HCT116 (cell line): ENCODE measurements at regions of chr10 and their contacts with region 1.

Region 1: DNA sequence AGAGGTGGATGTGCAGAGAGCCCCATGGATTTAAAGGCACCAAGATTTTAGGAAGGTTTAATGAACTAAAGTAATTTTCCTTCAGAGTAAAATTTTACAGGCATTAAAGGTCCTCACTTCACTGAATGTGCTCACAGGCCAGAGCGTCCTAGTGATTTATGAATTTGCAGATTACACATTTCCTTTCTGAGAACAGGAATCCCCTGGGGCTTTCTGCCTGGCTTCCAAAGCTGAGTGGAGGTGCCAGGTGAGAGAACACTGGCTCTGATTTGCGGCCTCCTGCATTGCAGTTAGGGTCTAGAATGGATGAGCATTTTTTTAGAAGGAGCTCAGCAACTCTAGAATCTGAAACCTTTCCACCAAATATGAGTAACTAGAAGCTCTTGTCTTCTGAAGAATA is 194.3 kb downstream of the SORCS3 start:
- DNase-seq: no peak
- ATAC-seq: no peak
- H3K4me3 ChIP-seq: no peak overlapping the region
- H3K27ac ChIP-seq: no peak overlapping the region
- H3K4me1 ChIP-seq: no peaks in the 10 kb centered on the region
- H3K27me3 ChIP-seq: peaks cover 93% of the 10 kb centered on the region
- CTCF ChIP-seq: no peak
- POLR2A ChIP-seq: no peak
- RAD21 ChIP-seq: no peak

Region 2: GRCh38 chr10:104472493-104472892 is 362.9 kb before region 1 on chr10:
- CTCF ChIA-PET with region 1: no interaction called
- POLR2A ChIA-PET with region 1: no interaction called
- RAD21 ChIA-PET with region 1: no interaction called
- intact Hi-C with region 1: no loop called
- DNase-seq: peak; percentile 3
- ATAC-seq: no peak
- H3K4me3 ChIP-seq: no peak overlapping the region
- H3K27ac ChIP-seq: no peak overlapping the region
- H3K4me1 ChIP-seq: no peaks in the 10 kb centered on the region
- H3K27me3 ChIP-seq: peaks cover 48% of the 10 kb centered on the region
- CTCF ChIP-seq: no peak
- POLR2A ChIP-seq: no peak
- RAD21 ChIP-seq: no peak

Region 3: DNA sequence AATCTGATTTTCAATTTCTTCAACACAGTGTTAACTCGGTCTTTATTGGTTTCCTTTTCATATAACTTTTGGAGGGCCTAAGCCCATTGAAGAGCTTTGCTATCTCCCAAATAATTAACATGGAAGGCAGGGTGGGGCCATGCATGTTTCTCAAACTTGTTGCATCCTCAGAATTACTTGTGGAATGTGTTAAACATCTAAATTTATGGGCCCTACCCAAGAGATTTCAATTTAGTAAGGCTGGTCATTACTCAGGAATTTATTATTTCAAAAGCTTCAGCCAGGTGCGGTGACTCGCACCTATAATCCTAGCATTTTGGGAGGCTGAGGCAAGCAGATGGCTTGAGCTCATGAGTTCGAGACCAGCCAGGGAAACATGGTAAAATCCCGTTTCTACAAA is 14.6 kb after region 1 on chr10:
- CTCF ChIA-PET with region 1: no interaction called
- POLR2A ChIA-PET with region 1: no interaction called
- RAD21 ChIA-PET with region 1: no interaction called
- intact Hi-C with region 1: loop called (anchors 1 kb)
- DNase-seq: no peak
- ATAC-seq: no peak
- H3K4me3 ChIP-seq: no peak overlapping the region
- H3K27ac ChIP-seq: no peak overlapping the region
- H3K4me1 ChIP-seq: peaks cover 0 to 9% of the 10 kb centered on the region in 2 experiments; a peak in 1 of 4 replicates
- H3K27me3 ChIP-seq: peaks cover 18% of the 10 kb centered on the region
- CTCF ChIP-seq: no peak
- POLR2A ChIP-seq: no peak
- RAD21 ChIP-seq: no peak

Region 4: DNA sequence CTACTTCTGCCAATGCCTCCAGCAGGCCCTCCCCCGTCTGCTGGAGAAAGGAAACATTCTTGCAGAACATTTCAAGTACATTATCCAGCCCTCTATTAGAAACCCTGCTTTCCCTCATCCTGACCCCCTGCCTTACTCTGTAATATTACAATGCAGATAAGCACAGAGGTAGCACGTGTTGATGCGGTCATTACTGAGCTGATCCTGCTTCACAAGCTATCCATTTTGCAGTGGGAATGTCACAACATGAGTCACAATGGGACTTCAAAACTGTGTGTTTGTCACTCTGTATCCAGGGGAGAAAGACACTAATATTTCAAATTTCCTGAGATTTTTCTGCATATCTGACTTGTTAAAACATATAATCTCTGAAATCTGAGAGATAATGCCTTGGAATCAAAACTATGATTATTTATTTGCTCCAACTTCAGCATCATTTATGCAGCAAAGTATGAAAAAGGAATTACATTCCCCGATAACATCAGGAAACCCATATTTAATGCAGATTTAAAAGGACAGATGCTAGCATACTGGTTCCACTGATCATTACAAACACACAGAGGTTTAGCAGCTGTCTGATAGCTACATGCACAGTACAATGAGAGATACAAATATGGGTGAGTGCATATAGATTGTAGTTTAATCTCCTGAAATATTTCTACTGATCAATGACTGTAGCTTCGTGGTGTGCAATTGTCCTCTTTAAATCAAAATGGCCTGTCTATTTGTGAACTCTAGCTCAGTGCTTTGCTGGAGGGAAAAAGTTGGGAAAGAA is 45.4 kb after region 1 on chr10:
- CTCF ChIA-PET with region 1: no interaction called
- POLR2A ChIA-PET with region 1: no interaction called
- RAD21 ChIA-PET with region 1: no interaction called
- intact Hi-C with region 1: no loop called
- DNase-seq: no peak
- ATAC-seq: no peak
- H3K4me3 ChIP-seq: no peak overlapping the region
- H3K27ac ChIP-seq: no peak overlapping the region
- H3K4me1 ChIP-seq: no peaks in the 10 kb centered on the region
- H3K27me3 ChIP-seq: peaks cover 56% of the 10 kb centered on the region
- CTCF ChIP-seq: no peak
- POLR2A ChIP-seq: no peak
- RAD21 ChIP-seq: no peak

Region 5: GRCh38 chr10:105056413-105056812 is 221.0 kb after region 1 on chr10:
- CTCF ChIA-PET with region 1: no interaction called
- POLR2A ChIA-PET with region 1: no interaction called
- RAD21 ChIA-PET with region 1: no interaction called
- intact Hi-C with region 1: no loop called
- DNase-seq: no peak
- ATAC-seq: no peak
- H3K4me3 ChIP-seq: no peak overlapping the region
- H3K27ac ChIP-seq: no peak overlapping the region
- H3K4me1 ChIP-seq: no peaks in the 10 kb centered on the region
- H3K27me3 ChIP-seq: no peaks in the 10 kb centered on the region
- CTCF ChIP-seq: no peak
- POLR2A ChIP-seq: no peak
- RAD21 ChIP-seq: no peak